PC-3 (cell line): ENCODE measurements at regions of chr12 and their contacts with region 1.

Region 1: DNA sequence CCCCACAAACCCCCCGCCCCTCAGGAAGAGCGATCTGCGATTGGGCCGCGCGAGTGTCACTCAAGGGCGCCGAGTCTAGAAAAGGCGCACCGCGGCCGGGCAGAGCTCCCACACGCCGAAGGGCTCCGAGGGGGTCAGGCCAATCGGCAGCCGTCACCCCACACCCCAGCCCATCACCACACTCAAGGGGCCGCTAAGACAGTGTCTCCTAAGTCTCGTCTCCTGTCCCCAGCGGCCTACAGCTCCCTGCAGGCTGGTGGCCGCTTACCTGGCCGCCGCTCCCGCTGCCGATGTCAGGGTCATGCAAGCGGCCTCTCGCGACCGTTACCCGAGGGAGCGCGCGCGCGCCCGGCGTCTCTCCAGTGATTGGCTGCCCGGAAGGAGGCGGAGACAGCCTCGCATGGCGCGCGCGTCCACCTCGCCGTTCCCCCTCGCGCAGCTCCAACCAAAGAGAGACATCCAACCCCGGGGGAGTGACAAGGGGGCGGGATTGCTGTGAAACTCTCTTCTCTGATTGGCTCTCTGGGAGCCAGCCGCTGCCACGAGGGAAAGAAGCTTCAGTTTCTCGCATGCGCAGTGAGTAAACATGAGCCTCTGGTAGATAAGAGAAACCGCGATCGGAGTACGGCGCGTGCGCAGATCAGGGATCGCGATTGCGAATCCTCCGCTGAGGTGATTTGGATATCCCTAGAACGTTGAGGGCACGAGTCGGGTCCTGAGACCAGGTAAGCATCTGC is at the starts of genes MPHOSPH9 and MTRFR:
- DNase-seq: peak; percentile 99
- ATAC-seq: peak; percentile 90
- H3K4me3 ChIP-seq: peak within 1 kb of the TSS; percentile 99
- H3K27ac ChIP-seq: peak within 1 kb of the TSS; percentile 52
- H3K4me1 ChIP-seq: peaks cover 24% of the 10 kb centered on the region; the same call in 1 of the 2 replicates
- H3K27me3 ChIP-seq: no peaks in the 10 kb centered on the region
- CTCF ChIP-seq: no peak
- total RNA-seq, gene MPHOSPH9: 34.2 and 42.5 TPM in 2 replicates
- total RNA-seq, gene MTRFR: 15.9 and 23.2 TPM in 2 replicates

Region 2: GRCh38 chr12:122974274-122974891 is 258.6 kb before region 1 on chr12:
- CTCF ChIA-PET with region 1: interaction called, 6 read pairs
- POLR2A ChIA-PET with region 1: interaction called, 5 read pairs
- intact Hi-C with region 1: loop called (anchors 2 kb)
- DNase-seq: peak; percentile 98
- ATAC-seq: peak; percentile 79
- H3K4me3 ChIP-seq: peak overlapping the region; percentile 96
- H3K27ac ChIP-seq: peak overlapping the region; percentile 83
- H3K4me1 ChIP-seq: peaks cover 13% of the 10 kb centered on the region
- H3K27me3 ChIP-seq: no peaks in the 10 kb centered on the region
- CTCF ChIP-seq: no peak

Region 3: DNA sequence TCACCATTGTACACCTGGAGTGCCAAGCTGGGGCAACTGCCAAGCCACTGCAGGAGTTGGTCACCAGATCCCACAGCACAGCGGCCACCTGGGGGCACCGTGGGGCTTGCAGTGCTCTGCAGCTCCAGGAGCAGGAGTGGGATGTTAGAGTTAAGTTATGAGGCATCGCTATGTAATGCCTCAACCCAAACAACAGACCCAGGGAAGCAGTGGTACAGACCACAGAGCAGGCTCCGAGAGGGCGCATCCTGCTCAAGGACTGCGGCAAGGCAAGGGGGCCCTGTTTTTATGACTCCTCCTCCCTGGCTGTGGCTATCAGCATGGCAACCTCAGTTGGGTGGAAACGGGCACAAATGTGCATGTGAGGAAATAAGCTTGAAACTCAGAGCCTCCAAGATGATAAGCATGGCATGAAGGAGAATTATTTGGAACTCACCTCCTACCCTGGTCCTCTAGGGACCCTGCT is 189.4 kb before region 1 on chr12:
- CTCF ChIA-PET with region 1: interaction called, 19 read pairs
- POLR2A ChIA-PET with region 1: no interaction called
- intact Hi-C with region 1: loop called (anchors 1 kb)
- DNase-seq: peak; percentile 92
- ATAC-seq: peak; percentile 100
- H3K4me3 ChIP-seq: no peak overlapping the region
- H3K27ac ChIP-seq: 0 out of 2 replicates have a peak overlapping the region, but pooled peaks have one; percentile 7
- H3K4me1 ChIP-seq: peaks cover 7% of the 10 kb centered on the region
- H3K27me3 ChIP-seq: no peaks in the 10 kb centered on the region
- CTCF ChIP-seq: peak; percentile 94

Region 4: DNA sequence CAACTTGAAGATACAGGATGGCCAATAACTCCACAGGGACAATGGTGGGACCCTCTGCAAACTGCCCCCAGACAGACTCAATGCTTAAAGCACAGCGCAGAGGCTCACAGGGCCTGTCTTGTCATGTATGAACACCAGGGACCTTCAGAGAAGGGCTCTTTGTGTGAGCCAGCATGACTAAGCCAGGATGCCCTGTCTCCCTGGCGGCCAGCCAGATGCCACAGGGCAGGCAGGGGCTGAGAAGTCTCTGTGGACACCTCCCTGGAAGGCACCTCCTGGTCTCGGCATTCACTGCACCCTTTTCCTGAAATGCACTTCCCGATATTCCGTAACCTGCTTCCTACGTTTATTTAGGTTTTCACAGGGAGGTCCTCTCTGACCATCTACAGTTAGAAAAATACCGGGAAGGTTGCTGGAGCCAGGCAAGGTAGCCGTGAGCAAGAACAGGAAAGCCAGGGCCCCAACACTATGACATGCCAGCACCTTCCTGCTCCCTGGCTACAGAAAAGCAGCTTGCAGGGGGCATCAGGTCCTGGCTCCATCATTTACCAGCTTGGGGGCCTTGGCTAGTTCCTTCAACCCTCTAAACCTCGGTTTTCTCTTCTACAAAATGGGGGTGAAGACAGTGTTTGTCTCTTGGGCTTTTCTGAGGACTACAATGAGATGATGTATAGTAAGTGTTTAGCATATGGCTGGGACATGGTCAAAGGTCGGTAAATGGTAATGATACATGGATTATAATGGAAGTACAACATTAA is 147.1 kb before region 1 on chr12:
- CTCF ChIA-PET with region 1: no interaction called
- POLR2A ChIA-PET with region 1: interaction called, 3 read pairs
- intact Hi-C with region 1: loop called (anchors 5 kb)
- DNase-seq: peak; percentile 96
- ATAC-seq: peak; percentile 77
- H3K4me3 ChIP-seq: no peak overlapping the region
- H3K27ac ChIP-seq: peak overlapping the region; percentile 64
- H3K4me1 ChIP-seq: peaks cover 40% of the 10 kb centered on the region
- H3K27me3 ChIP-seq: no peaks in the 10 kb centered on the region
- CTCF ChIP-seq: no peak

Region 5: DNA sequence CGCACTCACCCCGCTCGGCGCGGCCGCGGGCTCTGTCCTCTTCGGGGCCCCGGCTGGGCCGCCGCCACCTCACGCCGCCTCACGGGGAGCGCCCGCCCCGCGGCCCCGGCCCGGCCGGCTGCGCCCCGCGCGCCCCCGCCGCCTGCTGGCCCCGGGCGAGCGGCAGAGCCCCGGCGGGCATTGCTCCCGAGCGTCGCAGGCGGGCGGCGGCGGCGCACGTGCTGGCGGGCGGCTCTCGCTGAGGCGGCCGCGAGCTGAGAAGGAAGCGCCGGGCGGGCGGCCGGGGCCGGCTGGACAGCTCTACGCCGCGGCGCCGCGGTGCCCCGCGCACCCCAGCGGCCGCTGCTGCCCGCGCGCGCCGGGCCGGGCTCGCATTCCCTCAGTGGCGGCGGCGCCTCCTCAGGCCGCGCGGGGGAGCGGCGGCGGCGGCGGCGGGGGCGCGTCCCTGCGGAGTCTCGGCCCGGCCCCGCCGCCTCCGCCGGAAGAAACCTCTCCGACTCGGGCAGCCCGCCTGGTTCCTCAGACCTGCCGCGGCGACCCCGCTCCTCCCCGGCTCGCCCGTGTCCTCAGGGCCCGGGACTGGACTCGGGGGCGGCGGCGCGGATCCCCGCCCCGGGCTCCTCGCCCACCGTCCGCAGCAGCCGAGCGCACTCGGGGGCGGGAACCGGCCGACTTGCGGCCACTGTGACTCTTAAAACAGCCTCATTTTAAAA is 82.1 kb before region 1 on chr12 and contains the start of gene PITPNM2:
- CTCF ChIA-PET with region 1: interaction called, 9 read pairs
- POLR2A ChIA-PET with region 1: interaction called, 14 read pairs
- intact Hi-C with region 1: no loop called
- DNase-seq: peak; percentile 69
- ATAC-seq: peak; percentile 84
- H3K4me3 ChIP-seq: peak within 1 kb of the TSS; percentile 80
- H3K27ac ChIP-seq: no peak within 1 kb of the TSS
- H3K4me1 ChIP-seq: peaks cover 17% of the 10 kb centered on the region
- H3K27me3 ChIP-seq: no peaks in the 10 kb centered on the region
- CTCF ChIP-seq: no peak
- total RNA-seq, gene PITPNM2: 5.6 and 8.1 TPM in 2 replicates

Region 6: GRCh38 chr12:123163227-123163626 is 69.7 kb before region 1 on chr12:
- CTCF ChIA-PET with region 1: no interaction called
- POLR2A ChIA-PET with region 1: no interaction called
- intact Hi-C with region 1: loop called (anchors 5 kb)
- DNase-seq: peak; percentile 90
- ATAC-seq: peak; percentile 83
- H3K4me3 ChIP-seq: no peak overlapping the region
- H3K27ac ChIP-seq: peak overlapping the region; percentile 68
- H3K4me1 ChIP-seq: peaks cover 25% of the 10 kb centered on the region
- H3K27me3 ChIP-seq: no peaks in the 10 kb centered on the region
- CTCF ChIP-seq: no peak

Region 7: DNA sequence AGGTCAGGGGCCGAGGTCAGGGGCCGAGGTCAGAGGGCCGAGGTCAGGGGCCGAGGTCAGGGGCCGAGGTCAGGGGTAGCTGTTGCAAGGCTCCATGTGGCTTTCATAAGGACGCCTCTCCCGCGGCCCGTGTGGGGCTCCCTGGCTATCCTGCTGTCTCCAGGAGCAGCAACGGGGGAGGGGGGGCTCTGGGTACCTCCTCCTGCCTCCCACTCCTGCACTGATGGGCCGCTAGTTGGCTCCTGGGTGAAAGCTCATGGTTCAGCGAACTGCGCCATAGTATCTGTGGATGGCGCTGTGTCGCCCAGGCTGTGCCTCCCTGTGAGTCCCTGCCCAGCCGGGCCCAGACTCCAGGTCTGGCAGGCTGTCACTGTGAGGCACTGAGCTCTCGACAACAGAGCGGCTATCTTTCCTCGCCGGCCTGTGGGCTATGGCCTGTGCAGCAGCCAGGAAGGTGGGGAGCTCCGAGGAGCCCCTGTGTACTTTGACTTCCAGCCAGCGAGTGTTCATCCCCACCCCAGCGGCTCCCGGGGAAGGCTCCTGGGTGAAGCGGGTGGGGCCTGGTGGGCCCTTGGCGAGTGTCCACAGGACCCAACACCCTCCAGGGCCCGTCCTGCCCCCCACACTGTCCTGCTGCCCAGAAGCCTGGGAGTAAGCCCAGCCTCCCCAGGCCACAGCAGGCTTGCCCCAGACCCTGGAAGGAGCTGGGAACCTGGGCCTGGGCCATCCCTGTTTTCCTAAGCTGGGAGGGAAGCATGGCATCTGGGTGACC is 1070.0 kb after region 1 on chr12:
- CTCF ChIA-PET with region 1: no interaction called
- POLR2A ChIA-PET with region 1: no interaction called
- intact Hi-C with region 1: no loop called
- DNase-seq: no peak
- ATAC-seq: no peak
- H3K4me3 ChIP-seq: no peak overlapping the region
- H3K27ac ChIP-seq: no peak overlapping the region
- H3K4me1 ChIP-seq: no peaks in the 10 kb centered on the region
- H3K27me3 ChIP-seq: peaks cover 49% of the 10 kb centered on the region
- CTCF ChIP-seq: no peak